ENCODE measurements at regions of chr12 and their contacts with region 1.

Region 1: DNA sequence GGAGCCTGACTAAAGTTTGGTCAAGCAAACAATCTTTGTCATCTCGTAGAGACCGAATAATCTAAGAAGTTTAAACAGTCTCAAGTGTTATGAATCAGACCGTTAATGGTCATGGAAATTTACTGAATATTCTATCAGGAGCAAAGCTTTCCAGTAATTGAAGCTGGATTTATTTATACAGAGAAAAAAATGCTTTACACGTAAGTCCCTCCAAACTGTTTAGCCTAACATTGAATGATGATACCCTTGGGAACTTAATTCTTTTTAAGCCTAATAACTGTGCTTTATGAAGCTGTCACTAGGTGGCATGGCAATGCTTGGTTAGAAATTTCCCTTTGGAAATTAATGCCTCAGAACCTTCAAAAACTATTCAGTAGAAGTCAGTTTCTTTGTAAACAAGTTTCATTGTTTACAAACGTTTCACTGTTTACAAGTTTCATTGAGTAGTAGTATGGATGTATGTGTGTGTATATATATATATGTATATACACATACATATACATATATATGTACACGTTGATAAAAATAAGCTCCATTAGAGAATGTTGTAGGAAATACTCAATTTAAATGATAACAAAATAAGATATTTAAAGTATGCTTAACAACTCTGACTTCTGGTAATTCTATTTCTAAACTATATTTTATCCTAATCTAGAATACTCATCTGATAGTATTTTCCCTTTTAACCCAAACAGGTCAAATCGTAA is 32.1 kb downstream of the DEPDC4 start:
- DNase-seq: peak; percentile 51
- H3K4me3 ChIP-seq: no peak overlapping the region
- H3K27ac ChIP-seq: peak overlapping the region; percentile 62
- H3K27me3 ChIP-seq: no peaks in the 10 kb centered on the region
- CTCF ChIP-seq: peak; percentile 83

Region 2: GRCh38 chr12:100251917-100252316 is 17.2 kb after region 1 on chr12:
- CTCF ChIA-PET with region 1: interaction called, 10 read pairs
- POLR2A ChIA-PET with region 1: no interaction called
- DNase-seq: no peak
- H3K4me3 ChIP-seq: no peak overlapping the region
- H3K27ac ChIP-seq: no peak overlapping the region
- H3K27me3 ChIP-seq: no peaks in the 10 kb centered on the region
- CTCF ChIP-seq: no peak

Region 3: GRCh38 chr12:100324498-100324897 is 89.7 kb after region 1 on chr12:
- CTCF ChIA-PET with region 1: interaction called, 11 read pairs
- POLR2A ChIA-PET with region 1: no interaction called
- DNase-seq: no peak
- H3K4me3 ChIP-seq: no peak overlapping the region
- H3K27ac ChIP-seq: no peak overlapping the region
- H3K27me3 ChIP-seq: no peaks in the 10 kb centered on the region
- CTCF ChIP-seq: no peak

Region 4: GRCh38 chr12:100404769-100405407 is 170.1 kb after region 1 on chr12:
- CTCF ChIA-PET with region 1: interaction called, 51 read pairs
- POLR2A ChIA-PET with region 1: no interaction called
- DNase-seq: no peak
- H3K4me3 ChIP-seq: no peak overlapping the region
- H3K27ac ChIP-seq: no peak overlapping the region
- H3K27me3 ChIP-seq: no peaks in the 10 kb centered on the region
- CTCF ChIP-seq: peak; percentile 61

Region 5: GRCh38 chr12:100566887-100567637 is 332.3 kb after region 1 on chr12:
- CTCF ChIA-PET with region 1: interaction called, 12 read pairs
- POLR2A ChIA-PET with region 1: no interaction called
- DNase-seq: no peak
- H3K4me3 ChIP-seq: no peak overlapping the region
- H3K27ac ChIP-seq: no peak overlapping the region
- H3K27me3 ChIP-seq: no peaks in the 10 kb centered on the region
- CTCF ChIP-seq: no peak

Measured in AG04450 (cell line).